ENCODE measurements at regions of chr10 and their contacts with region 1.

Region 1: DNA sequence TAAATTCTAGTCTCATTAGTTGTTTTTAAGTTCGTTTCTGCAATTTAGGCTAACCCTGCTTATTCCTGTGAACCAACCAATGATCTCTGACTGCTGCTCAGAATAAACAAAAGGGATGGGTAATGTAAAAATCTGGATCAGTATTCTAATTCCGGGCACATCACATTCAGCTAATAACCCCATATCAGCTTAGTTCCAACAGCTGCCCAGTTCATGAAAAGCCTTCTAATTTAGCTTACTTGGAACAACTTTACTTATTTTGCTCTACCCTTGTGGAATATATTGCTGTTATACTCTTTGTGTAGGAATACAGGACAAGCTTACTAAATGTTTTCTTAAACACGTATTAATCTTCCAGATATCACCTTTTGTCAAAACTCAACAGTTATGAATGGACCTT is 3.6 kb upstream of the CFAP43 start:
- DNase-seq: no peak
- ATAC-seq: no peak

Region 2: GRCh38 chr10:104254493-104255310 is 18.9 kb after region 1 on chr10 and contains the start of gene GSTO1:
- intact Hi-C with region 1: loop called (anchors 2 kb)
- DNase-seq: peak; percentile 88
- ATAC-seq: peak; percentile 93
- total RNA-seq, gene GSTO1: 55.7 TPM

Region 3: GRCh38 chr10:104268716-104269645 is 33.2 kb after region 1 on chr10 and contains the start of gene GSTO2:
- intact Hi-C with region 1: no loop called
- DNase-seq: peak; percentile 98
- ATAC-seq: peak; percentile 100
- total RNA-seq, gene GSTO2: 2.1 TPM

Measured in sciatic nerve (tissue), 2 donors.